Lower lobe of right lung (tissue), 2 donors: ENCODE measurements at regions of chr3 and their contacts with region 1.

Region 1: DNA sequence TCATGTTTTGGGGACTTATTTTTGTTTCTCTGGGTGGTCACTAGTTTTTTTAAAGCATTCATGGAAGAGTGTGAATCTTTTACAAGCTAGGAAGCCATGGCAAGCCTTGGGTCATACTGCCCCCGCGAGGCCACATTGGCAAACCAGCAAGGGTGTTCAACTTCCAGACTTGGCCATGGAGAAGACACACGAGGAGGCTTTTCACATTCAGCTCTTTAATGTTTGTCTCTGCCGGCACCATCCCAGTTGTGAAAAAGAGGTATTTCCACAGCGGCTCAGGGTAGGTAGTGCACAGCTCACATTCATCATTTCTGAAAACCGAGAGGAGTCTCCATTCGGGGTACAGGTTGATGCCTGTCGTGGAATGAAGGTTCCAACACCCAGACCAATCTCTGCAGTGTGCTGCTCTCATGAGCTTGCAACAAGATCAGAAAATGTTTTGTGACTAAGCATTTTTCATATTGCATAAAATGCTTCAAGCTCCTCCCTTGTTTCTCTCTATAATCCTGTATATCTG is 7.7 kb downstream of the CCR5 start:
- DNase-seq: peak; percentile 77
- ATAC-seq: peak; percentile 64 to 79
- H3K4me3 ChIP-seq: no peak overlapping the region
- H3K27ac ChIP-seq: no peak overlapping the region
- H3K4me1 ChIP-seq: peaks cover 47% of the 10 kb centered on the region
- H3K27me3 ChIP-seq: no peaks in the 10 kb centered on the region
- CTCF ChIP-seq: peak; percentile 81

Region 2: GRCh38 chr3:46089237-46090011 is 289.1 kb before region 1 on chr3:
- intact Hi-C with region 1: loop called (anchors 10 kb)
- DNase-seq: peak; percentile 86
- ATAC-seq: peak; percentile 85 to 94
- H3K4me3 ChIP-seq: no peak overlapping the region
- H3K27ac ChIP-seq: peak overlapping the region; percentile 76
- H3K4me1 ChIP-seq: peaks cover 22% of the 10 kb centered on the region
- H3K27me3 ChIP-seq: no peaks in the 10 kb centered on the region
- CTCF ChIP-seq: no peak

Region 3: DNA sequence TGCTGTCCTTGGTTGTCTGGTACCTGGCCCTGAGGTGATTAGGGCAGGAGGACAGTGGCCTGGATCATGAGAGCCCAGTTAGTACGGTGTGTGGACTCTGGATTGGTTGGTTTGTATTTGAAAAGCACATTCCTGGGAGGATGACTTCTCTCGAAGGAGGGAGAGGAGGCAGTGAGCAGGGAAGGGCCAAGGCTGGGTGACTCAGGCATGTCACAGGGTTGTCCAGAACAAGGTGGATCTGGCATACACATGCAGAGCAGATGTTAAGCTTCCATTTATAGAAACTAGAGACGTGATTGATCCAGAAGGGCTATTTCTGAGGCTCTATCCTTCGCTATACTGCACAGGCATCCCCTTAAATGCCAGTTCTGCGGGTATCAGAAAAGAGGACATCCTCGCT is 268.2 kb after region 1 on chr3:
- intact Hi-C with region 1: no loop called
- DNase-seq: no peak
- ATAC-seq: no peak
- H3K4me3 ChIP-seq: no peak overlapping the region
- H3K27ac ChIP-seq: no peak overlapping the region
- H3K4me1 ChIP-seq: no peaks in the 10 kb centered on the region
- H3K27me3 ChIP-seq: no peaks in the 10 kb centered on the region
- CTCF ChIP-seq: no peak